Naive thymus-derived CD4-positive, alpha-beta T cell (primary cell): ENCODE measurements at regions of chr3 and their contacts with region 1.

Region 1: GRCh38 chr3:71444028-71444860 is 139.3 kb downstream of the FOXP1 start:
- DNase-seq: peak; percentile 57 to 97 (median 94)
- ATAC-seq: peak; percentile 88
- H3K4me3 ChIP-seq: peak overlapping the region; percentile 12
- H3K4me3 Mint-ChIP-seq: peak overlapping the region; percentile 64 to 86 (median 77)
- H3K27ac ChIP-seq: peak overlapping the region; percentile 90
- H3K27ac Mint-ChIP-seq: peak overlapping the region; percentile 94 to 100 (median 99)
- H3K4me1 ChIP-seq: peaks cover 93 to 96% of the 10 kb centered on the region in 2 donors
- H3K4me1 Mint-ChIP-seq: peaks cover 70 to 100% (median 96%) of the 10 kb centered on the region in 7 donors
- H3K27me3 ChIP-seq: no peaks in the 10 kb centered on the region
- H3K27me3 Mint-ChIP-seq: peaks cover 0 to 2% (median 0%) of the 10 kb centered on the region in 5 donors

Region 2: GRCh38 chr3:71103430-71103921 is 340.8 kb before region 1 on chr3:
- CTCF ChIA-PET with region 1: no interaction called
- POLR2A ChIA-PET with region 1: no interaction called
- intact Hi-C with region 1: no loop called
- DNase-seq: no peak
- ATAC-seq: no peak
- H3K4me3 ChIP-seq: no peak overlapping the region
- H3K4me3 Mint-ChIP-seq: peak overlapping the region in 5 of 10 donors; percentile 8 to 42 (median 40)
- H3K27ac ChIP-seq: no peak overlapping the region
- H3K27ac Mint-ChIP-seq: peak overlapping the region in 8 of 9 donors; percentile 20 to 88 (median 70)
- H3K4me1 ChIP-seq: peaks cover 31 to 66% of the 10 kb centered on the region in 2 donors
- H3K4me1 Mint-ChIP-seq: peaks cover 56 to 99% (median 88%) of the 10 kb centered on the region in 7 donors
- H3K27me3 ChIP-seq: no peaks in the 10 kb centered on the region
- H3K27me3 Mint-ChIP-seq: no peaks in the 10 kb centered on the region

Region 3: GRCh38 chr3:71130471-71131374 is 313.5 kb before region 1 on chr3:
- CTCF ChIA-PET with region 1: no interaction called
- POLR2A ChIA-PET with region 1: interaction called, 3 read pairs
- intact Hi-C with region 1: loop called (anchors 1 kb)
- DNase-seq: peak; percentile 33 to 90 (median 85)
- ATAC-seq: peak; percentile 86
- H3K4me3 ChIP-seq: peak overlapping the region; percentile 71
- H3K4me3 Mint-ChIP-seq: peak overlapping the region; percentile 85 to 99 (median 93)
- H3K27ac ChIP-seq: peak overlapping the region; percentile 89
- H3K27ac Mint-ChIP-seq: peak overlapping the region; percentile 94 to 99 (median 97)
- H3K4me1 ChIP-seq: peaks cover 42 to 51% of the 10 kb centered on the region in 2 donors
- H3K4me1 Mint-ChIP-seq: peaks cover 49 to 85% (median 80%) of the 10 kb centered on the region in 7 donors
- H3K27me3 ChIP-seq: no peaks in the 10 kb centered on the region
- H3K27me3 Mint-ChIP-seq: no peaks in the 10 kb centered on the region

Region 4: GRCh38 chr3:71389911-71390573 is 54.2 kb before region 1 on chr3:
- CTCF ChIA-PET with region 1: interaction called, 4 read pairs
- POLR2A ChIA-PET with region 1: interaction called, 3 read pairs
- intact Hi-C with region 1: loop called in 1 of 2 experiments (anchors 2 kb)
- DNase-seq: peak in 8 of 9 donors; percentile 25 to 67 (median 49)
- ATAC-seq: peak; percentile 55
- H3K4me3 ChIP-seq: peak overlapping the region; percentile 51
- H3K4me3 Mint-ChIP-seq: peak overlapping the region; percentile 68 to 88 (median 83)
- H3K27ac ChIP-seq: peak overlapping the region; percentile 81
- H3K27ac Mint-ChIP-seq: peak overlapping the region; percentile 75 to 99 (median 90)
- H3K4me1 ChIP-seq: peaks cover 29 to 74% of the 10 kb centered on the region in 2 donors
- H3K4me1 Mint-ChIP-seq: peaks cover 27 to 93% (median 83%) of the 10 kb centered on the region in 7 donors
- H3K27me3 ChIP-seq: no peaks in the 10 kb centered on the region
- H3K27me3 Mint-ChIP-seq: peaks cover 0 to 22% (median 0%) of the 10 kb centered on the region in 5 donors

Region 5: GRCh38 chr3:71423151-71423906 is 20.9 kb before region 1 on chr3:
- CTCF ChIA-PET with region 1: interaction called, 3 read pairs
- POLR2A ChIA-PET with region 1: interaction called, 356 read pairs
- intact Hi-C with region 1: loop called (anchors 1 kb)
- DNase-seq: no peak
- ATAC-seq: no peak
- H3K4me3 ChIP-seq: peak overlapping the region; percentile 24
- H3K4me3 Mint-ChIP-seq: peak overlapping the region in 9 of 10 donors; percentile 35 to 85 (median 65)
- H3K27ac ChIP-seq: peak overlapping the region; percentile 73
- H3K27ac Mint-ChIP-seq: peak overlapping the region; percentile 78 to 99 (median 98)
- H3K4me1 ChIP-seq: peaks cover 28 to 80% of the 10 kb centered on the region in 2 donors
- H3K4me1 Mint-ChIP-seq: peaks cover 42 to 98% (median 95%) of the 10 kb centered on the region in 7 donors
- H3K27me3 ChIP-seq: no peaks in the 10 kb centered on the region
- H3K27me3 Mint-ChIP-seq: peaks cover 0 to 46% (median 0%) of the 10 kb centered on the region in 5 donors

Region 6: DNA sequence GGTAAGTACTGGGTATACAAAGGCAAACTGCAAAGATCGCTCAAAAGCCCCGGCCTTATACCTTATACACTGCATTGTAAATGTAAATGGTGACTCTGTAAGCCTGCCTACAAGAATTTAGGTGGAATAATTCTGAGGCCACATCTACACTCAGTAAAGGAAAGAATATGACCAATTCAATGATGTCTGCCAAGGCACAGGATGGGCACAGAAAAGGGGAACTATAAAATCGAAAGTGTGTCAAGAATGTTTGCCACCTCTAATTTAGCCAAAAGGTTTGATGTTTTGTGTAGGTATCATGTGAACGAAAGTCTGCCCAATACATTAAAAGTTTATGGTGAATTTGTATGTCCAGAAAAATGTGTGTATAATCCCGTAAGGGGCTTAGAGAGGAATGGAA is 43.2 kb after region 1 on chr3:
- CTCF ChIA-PET with region 1: interaction called, 3 read pairs
- POLR2A ChIA-PET with region 1: interaction called, 182 read pairs
- intact Hi-C with region 1: loop called (anchors 1 kb)
- DNase-seq: peak in 2 of 9 donors; percentile 23 to 32
- ATAC-seq: no peak
- H3K4me3 ChIP-seq: peak overlapping the region; percentile 19
- H3K4me3 Mint-ChIP-seq: peak overlapping the region; percentile 70 to 98 (median 88)
- H3K27ac ChIP-seq: peak overlapping the region; percentile 89
- H3K27ac Mint-ChIP-seq: peak overlapping the region; percentile 79 to 100 (median 98)
- H3K4me1 ChIP-seq: peaks cover 66 to 93% of the 10 kb centered on the region in 2 donors
- H3K4me1 Mint-ChIP-seq: peaks cover 44 to 94% (median 88%) of the 10 kb centered on the region in 7 donors
- H3K27me3 ChIP-seq: no peaks in the 10 kb centered on the region
- H3K27me3 Mint-ChIP-seq: peaks cover 0 to 3% (median 0%) of the 10 kb centered on the region in 5 donors

Region 7: DNA sequence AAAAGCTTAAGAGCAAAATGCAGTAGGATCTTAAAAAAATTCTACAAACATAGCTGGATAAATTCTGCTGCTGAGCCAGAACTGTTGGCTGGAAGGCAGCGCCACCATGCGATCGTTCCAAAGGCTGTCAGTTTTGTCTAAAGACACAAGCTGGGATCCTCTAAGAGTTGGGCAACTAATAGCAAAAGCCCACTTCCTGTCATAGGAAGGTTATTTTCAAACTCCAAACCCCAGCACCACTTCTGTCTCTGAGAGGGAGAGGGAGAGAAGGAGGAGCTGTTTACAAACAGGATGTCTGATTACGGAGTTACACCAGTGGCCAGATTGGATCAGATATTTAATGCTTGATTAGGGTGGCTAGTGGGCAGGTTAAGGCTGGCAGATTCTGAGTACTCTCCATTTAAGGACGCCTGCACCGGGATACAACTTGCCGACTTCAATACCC is 237.0 kb after region 1 on chr3:
- CTCF ChIA-PET with region 1: no interaction called
- POLR2A ChIA-PET with region 1: no interaction called
- intact Hi-C with region 1: no loop called
- DNase-seq: peak in 6 of 9 donors; percentile 12 to 54 (median 18)
- ATAC-seq: peak; percentile 60
- H3K4me3 ChIP-seq: no peak overlapping the region
- H3K4me3 Mint-ChIP-seq: no peak overlapping the region
- H3K27ac ChIP-seq: no peak overlapping the region
- H3K27ac Mint-ChIP-seq: peak overlapping the region in 4 of 9 donors; percentile 48 to 86 (median 60)
- H3K4me1 ChIP-seq: no peaks in the 10 kb centered on the region
- H3K4me1 Mint-ChIP-seq: peaks cover 0 to 22% (median 10%) of the 10 kb centered on the region in 7 donors
- H3K27me3 ChIP-seq: no peaks in the 10 kb centered on the region
- H3K27me3 Mint-ChIP-seq: no peaks in the 10 kb centered on the region

Region 8: GRCh38 chr3:72814308-72814707 is 1370.1 kb after region 1 on chr3:
- CTCF ChIA-PET with region 1: no interaction called
- POLR2A ChIA-PET with region 1: no interaction called
- intact Hi-C with region 1: no loop called
- DNase-seq: no peak
- ATAC-seq: no peak
- H3K4me3 ChIP-seq: no peak overlapping the region
- H3K4me3 Mint-ChIP-seq: no peak overlapping the region
- H3K27ac ChIP-seq: no peak overlapping the region
- H3K27ac Mint-ChIP-seq: no peak overlapping the region
- H3K4me1 ChIP-seq: peaks cover 0 to 3% of the 10 kb centered on the region in 2 donors
- H3K4me1 Mint-ChIP-seq: peaks cover 0 to 20% (median 15%) of the 10 kb centered on the region in 7 donors
- H3K27me3 ChIP-seq: no peaks in the 10 kb centered on the region
- H3K27me3 Mint-ChIP-seq: no peaks in the 10 kb centered on the region